Endothelial cell of umbilical vein (primary cell): ENCODE measurements at regions of chr5 and their contacts with region 1.

Region 1: GRCh38 chr5:6765612-6766525 is 52.6 kb downstream of the TENT4A start:
- DNase-seq: peak; percentile 74
- H3K4me3 ChIP-seq: no peak overlapping the region
- H3K27ac ChIP-seq: no peak overlapping the region
- H3K4me1 ChIP-seq: peaks cover 10% of the 10 kb centered on the region
- H3K27me3 ChIP-seq: no peaks in the 10 kb centered on the region
- CTCF ChIP-seq: peak; percentile 78 to 92
- POLR2A ChIP-seq: no peak

Region 2: GRCh38 chr5:6804766-6805501 is 39.1 kb after region 1 on chr5:
- CTCF ChIA-PET with region 1: no interaction called
- POLR2A ChIA-PET with region 1: no interaction called
- dilution Hi-C with region 1: no loop called
- intact Hi-C with region 1: no loop called
- DNase-seq: no peak
- H3K4me3 ChIP-seq: no peak overlapping the region
- H3K27ac ChIP-seq: no peak overlapping the region
- H3K4me1 ChIP-seq: no peaks in the 10 kb centered on the region
- H3K27me3 ChIP-seq: no peaks in the 10 kb centered on the region
- CTCF ChIP-seq: no peak
- POLR2A ChIP-seq: no peak

Region 3: DNA sequence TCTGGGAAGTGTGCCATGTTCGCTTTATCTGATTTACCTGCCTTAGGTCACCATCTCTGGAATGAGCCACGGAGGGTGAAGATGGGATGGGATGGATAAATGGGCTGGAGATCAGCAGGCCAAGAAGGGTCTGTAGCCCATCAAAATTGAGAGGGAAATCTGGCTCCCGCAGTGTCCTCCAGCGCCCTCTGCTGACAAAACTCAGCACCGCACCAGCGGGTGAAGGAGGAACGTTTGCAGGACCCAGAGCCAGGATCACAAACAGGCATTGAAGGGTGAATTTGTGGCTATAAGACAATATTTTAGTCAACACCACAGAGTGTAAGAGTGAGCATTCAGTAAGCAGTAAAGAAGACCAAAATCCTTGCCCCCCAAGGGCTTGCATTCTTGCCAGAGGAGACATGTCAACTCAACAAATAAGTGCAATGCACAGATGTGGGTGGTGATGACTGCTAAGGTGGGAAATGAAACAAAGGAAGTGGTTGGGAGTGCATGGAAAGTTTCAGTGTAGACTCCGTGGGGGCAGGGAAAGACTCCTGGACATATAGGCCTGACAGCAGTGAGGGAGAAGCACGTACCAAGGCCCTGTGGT is 71.7 kb after region 1 on chr5:
- CTCF ChIA-PET with region 1: interaction called, 9 read pairs
- POLR2A ChIA-PET with region 1: no interaction called
- dilution Hi-C with region 1: no loop called
- intact Hi-C with region 1: loop called (anchors 1 kb)
- DNase-seq: peak; percentile 25
- H3K4me3 ChIP-seq: no peak overlapping the region
- H3K27ac ChIP-seq: no peak overlapping the region
- H3K4me1 ChIP-seq: no peaks in the 10 kb centered on the region
- H3K27me3 ChIP-seq: no peaks in the 10 kb centered on the region
- CTCF ChIP-seq: peak; percentile 66 to 83
- POLR2A ChIP-seq: no peak

Region 4: GRCh38 chr5:7754992-7755596 is 989.2 kb after region 1 on chr5:
- CTCF ChIA-PET with region 1: interaction called, 41 read pairs
- POLR2A ChIA-PET with region 1: no interaction called
- dilution Hi-C with region 1: no loop called
- intact Hi-C with region 1: loop called (anchors 1 kb)
- DNase-seq: peak; percentile 25
- H3K4me3 ChIP-seq: no peak overlapping the region
- H3K27ac ChIP-seq: no peak overlapping the region
- H3K4me1 ChIP-seq: no peaks in the 10 kb centered on the region
- H3K27me3 ChIP-seq: no peaks in the 10 kb centered on the region
- CTCF ChIP-seq: peak; percentile 70 to 80
- POLR2A ChIP-seq: no peak

Region 5: DNA sequence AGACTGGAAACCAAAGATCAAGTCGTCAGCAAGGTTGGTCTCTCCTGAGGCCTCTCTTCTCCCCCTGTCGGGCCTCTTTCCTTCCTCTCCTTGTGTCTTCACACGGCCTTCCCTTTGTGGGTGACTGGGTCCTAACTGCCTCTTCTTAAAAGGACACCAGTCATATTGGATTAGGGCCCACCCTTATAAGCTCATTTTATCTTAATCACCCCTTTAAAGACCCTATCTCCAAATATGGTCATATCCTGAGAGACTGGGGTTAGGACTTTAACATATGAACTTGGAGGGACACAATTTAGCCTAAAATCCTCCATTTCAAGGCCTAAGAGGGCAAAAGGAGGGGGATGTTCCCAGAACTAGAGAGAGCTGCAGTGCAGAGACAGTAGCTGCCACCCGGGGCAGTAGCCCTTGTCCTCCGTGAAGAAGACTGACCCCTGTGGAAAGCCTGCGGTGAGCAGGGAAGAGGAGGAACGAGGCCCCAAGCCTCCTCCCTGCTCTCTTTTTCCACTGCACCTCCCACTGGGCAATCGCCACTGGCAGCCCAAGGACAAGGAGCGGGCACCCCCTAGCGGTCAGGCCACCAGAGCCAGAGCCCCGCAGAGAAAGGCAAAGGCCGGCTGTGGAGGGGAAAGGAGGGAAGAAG is 1050.1 kb after region 1 on chr5:
- CTCF ChIA-PET with region 1: interaction called, 13 read pairs
- POLR2A ChIA-PET with region 1: no interaction called
- dilution Hi-C with region 1: no loop called
- intact Hi-C with region 1: loop called (anchors 1 kb)
- DNase-seq: peak; percentile 30
- H3K4me3 ChIP-seq: no peak overlapping the region
- H3K27ac ChIP-seq: no peak overlapping the region
- H3K4me1 ChIP-seq: no peaks in the 10 kb centered on the region
- H3K27me3 ChIP-seq: no peaks in the 10 kb centered on the region
- CTCF ChIP-seq: peak; percentile 84 to 88
- POLR2A ChIP-seq: no peak